Heart left ventricle (tissue), 16 donors: ENCODE measurements at regions of chr3 and their contacts with region 1.

Region 1: DNA sequence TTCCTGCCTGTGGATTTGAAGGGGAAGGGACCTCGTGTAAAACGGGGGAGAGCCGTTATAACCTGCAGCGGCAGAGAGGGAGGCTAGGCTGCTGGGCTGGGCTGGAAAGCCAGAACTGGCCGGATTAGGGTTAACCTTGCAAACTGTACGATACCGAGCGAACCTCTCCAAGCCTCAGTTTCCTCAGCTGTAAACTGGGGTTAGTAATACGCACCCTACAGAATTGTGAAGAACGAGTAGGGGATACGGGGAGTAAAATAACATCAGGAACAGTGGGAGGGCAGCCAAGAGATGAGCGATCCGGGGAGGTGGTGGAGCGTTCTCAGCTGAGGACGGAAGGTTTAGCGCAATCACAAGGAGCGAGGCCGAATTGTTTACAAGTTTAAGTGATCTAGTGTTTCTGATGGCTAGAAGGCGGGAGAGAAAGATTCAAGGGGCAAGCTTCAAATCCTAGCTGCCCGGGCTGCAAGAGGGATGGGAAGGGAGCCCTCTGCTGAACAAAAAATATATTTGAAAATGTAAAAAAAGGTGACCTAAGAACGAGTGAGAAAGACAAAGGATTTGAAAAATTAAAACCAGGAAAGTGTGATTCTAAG is 768 bp upstream of the SEMA5B start:
- DNase-seq: peak in 3 of 5 donors; percentile 34 to 46 (median 37)
- ATAC-seq: peak in 2 of 4 donors; percentile 51 to 56
- H3K4me3 ChIP-seq: peak overlapping the region; percentile 45 to 82 (median 68)
- H3K27ac ChIP-seq: peak overlapping the region in 9 of 12 donors; percentile 5 to 73 (median 51)
- H3K4me1 ChIP-seq: peaks cover 0 to 34% (median 22%) of the 10 kb centered on the region in 12 donors
- H3K27me3 ChIP-seq: peaks cover 0 to 65% (median 11%) of the 10 kb centered on the region in 9 donors
- CTCF ChIP-seq: peak; percentile 29 to 72 (median 56)
- POLR2A ChIP-seq: no peak

Region 2: DNA sequence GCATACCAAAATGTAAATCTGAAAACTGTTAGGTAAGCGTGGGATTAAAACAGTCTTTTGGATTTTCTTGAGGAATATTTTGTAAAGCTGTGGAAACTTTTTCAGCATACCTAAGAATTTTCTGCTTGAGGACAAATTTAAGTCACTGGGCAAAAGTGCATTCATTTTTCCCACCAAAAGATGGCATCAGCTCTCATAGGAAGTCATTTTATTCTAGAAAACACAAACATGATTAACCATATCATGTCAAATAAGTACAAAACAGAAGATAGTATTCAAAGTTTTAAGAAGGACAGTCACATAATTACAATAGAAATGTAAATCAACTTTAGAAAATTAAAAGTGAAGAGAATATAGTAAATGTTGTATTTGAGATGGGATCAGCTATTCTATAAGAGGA is 170.0 kb before region 1 on chr3:
- intact Hi-C with region 1: loop called in 3 of 10 experiments (anchors 5 to 10 kb)
- DNase-seq: no peak
- ATAC-seq: no peak
- H3K4me3 ChIP-seq: no peak overlapping the region
- H3K27ac ChIP-seq: no peak overlapping the region
- H3K4me1 ChIP-seq: no peaks in the 10 kb centered on the region
- H3K27me3 ChIP-seq: no peaks in the 10 kb centered on the region
- CTCF ChIP-seq: peak in 11 of 12 donors; percentile 18 to 60 (median 40)
- POLR2A ChIP-seq: no peak

Region 3: DNA sequence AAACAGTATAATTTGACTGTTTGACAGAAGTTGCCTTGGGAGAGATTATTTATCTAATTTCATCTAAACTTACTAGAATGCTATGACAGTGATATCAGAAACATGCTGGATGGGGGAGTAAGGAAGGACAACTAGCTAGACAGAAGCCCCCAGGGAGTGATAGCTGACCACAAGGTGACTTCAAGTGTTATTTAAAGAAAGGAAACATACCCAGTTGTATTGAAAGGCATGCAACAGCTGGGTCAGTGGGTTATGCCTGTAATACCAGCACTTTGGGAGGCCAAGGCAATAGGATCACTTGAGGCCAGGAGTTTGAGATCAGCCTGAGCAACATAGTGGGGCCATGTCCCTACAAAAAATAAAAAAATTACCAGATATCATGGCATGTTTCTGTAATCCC is 163.8 kb before region 1 on chr3:
- intact Hi-C with region 1: loop called in 3 of 10 experiments (anchors 5 to 10 kb)
- DNase-seq: no peak
- ATAC-seq: no peak
- H3K4me3 ChIP-seq: no peak overlapping the region
- H3K27ac ChIP-seq: no peak overlapping the region
- H3K4me1 ChIP-seq: no peaks in the 10 kb centered on the region
- H3K27me3 ChIP-seq: no peaks in the 10 kb centered on the region
- CTCF ChIP-seq: no peak
- POLR2A ChIP-seq: no peak

Region 4: GRCh38 chr3:122942937-122943827 is 85.1 kb before region 1 on chr3:
- intact Hi-C with region 1: loop called (anchors 1 to 5 kb)
- DNase-seq: peak; percentile 74 to 78 (median 77)
- ATAC-seq: peak; percentile 74 to 91 (median 86)
- H3K4me3 ChIP-seq: no peak overlapping the region
- H3K27ac ChIP-seq: peak overlapping the region in 4 of 12 donors; percentile 4 to 42 (median 13)
- H3K4me1 ChIP-seq: peaks cover 0 to 46% (median 23%) of the 10 kb centered on the region in 12 donors
- H3K27me3 ChIP-seq: no peaks in the 10 kb centered on the region
- CTCF ChIP-seq: peak; percentile 77 to 92 (median 87)
- POLR2A ChIP-seq: no peak

Region 5: GRCh38 chr3:123201566-123202427 is 173.5 kb after region 1 on chr3 and contains the start of gene SEC22A:
- intact Hi-C with region 1: loop called in 2 of 10 experiments (anchors 5 to 10 kb)
- DNase-seq: peak; percentile 92 to 94 (median 93)
- ATAC-seq: peak; percentile 98 to 100 (median 99)
- H3K4me3 ChIP-seq: peak within 1 kb of the TSS; percentile 74 to 99 (median 96)
- H3K27ac ChIP-seq: peak within 1 kb of the TSS; percentile 56 to 93 (median 84)
- H3K4me1 ChIP-seq: peaks cover 0 to 22% (median 10%) of the 10 kb centered on the region in 12 donors
- H3K27me3 ChIP-seq: no peaks in the 10 kb centered on the region
- CTCF ChIP-seq: no peak
- POLR2A ChIP-seq: peak in 1 of 2 donors; percentile 80
- total RNA-seq, gene SEC22A: 7.6 to 27.0 (median 10.0) TPM

Region 6: GRCh38 chr3:123258811-123259420 is 230.6 kb after region 1 on chr3:
- intact Hi-C with region 1: loop called in 8 of 10 experiments (anchors 5 to 10 kb)
- DNase-seq: no peak
- ATAC-seq: peak in 3 of 4 donors; percentile 22 to 58 (median 56)
- H3K4me3 ChIP-seq: no peak overlapping the region
- H3K27ac ChIP-seq: no peak overlapping the region
- H3K4me1 ChIP-seq: peaks cover 0 to 12% (median 0%) of the 10 kb centered on the region in 12 donors
- H3K27me3 ChIP-seq: no peaks in the 10 kb centered on the region
- CTCF ChIP-seq: peak; percentile 33 to 73 (median 57)
- POLR2A ChIP-seq: no peak

Region 7: DNA sequence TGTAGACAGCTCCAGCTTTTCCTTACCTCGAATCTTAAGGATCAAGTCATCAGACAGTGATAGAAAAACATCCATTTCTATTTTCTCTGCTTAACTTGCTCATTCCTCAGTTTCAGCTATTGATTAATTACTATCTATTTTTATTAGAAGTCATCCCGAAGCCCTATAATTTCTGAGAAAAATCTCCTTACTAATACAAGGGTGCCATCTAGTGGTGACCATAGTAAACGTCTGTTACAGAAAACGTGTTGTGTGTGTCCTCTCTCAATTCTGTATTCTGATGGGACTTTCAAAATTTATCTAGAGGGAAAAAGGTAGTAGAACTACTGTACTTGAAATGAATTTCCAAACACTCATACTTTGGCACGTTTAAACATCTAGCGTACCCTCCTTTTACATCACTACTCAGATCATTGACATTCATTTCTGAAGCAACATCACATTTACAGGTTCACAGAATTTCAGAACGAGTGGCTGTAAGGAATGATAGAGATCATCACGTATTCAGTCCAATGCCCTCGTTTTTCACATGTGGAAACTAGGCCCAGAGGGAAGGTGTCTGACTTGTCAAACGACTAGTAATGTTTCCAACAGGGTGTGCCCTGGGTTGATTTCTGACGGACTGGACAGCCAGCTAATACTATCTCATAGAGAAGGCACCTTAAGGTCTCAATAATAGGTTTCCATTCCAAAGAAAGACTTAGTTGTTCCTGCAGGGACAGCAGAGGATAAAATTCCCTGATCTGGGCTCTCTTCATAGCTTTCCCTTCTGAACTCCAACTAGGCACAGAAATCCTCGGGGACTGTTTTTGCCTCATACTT is 530.9 kb after region 1 on chr3:
- intact Hi-C with region 1: loop called in 1 of 10 experiments (anchors 10 kb)
- DNase-seq: no peak
- ATAC-seq: peak in 2 of 4 donors; percentile 41
- H3K4me3 ChIP-seq: no peak overlapping the region
- H3K27ac ChIP-seq: no peak overlapping the region
- H3K4me1 ChIP-seq: peaks cover 0 to 5% (median 0%) of the 10 kb centered on the region in 12 donors
- H3K27me3 ChIP-seq: no peaks in the 10 kb centered on the region
- CTCF ChIP-seq: peak; percentile 78 to 95 (median 84)
- POLR2A ChIP-seq: no peak